ENCODE measurements at regions of chr14 and their contacts with region 1.

Region 1: DNA sequence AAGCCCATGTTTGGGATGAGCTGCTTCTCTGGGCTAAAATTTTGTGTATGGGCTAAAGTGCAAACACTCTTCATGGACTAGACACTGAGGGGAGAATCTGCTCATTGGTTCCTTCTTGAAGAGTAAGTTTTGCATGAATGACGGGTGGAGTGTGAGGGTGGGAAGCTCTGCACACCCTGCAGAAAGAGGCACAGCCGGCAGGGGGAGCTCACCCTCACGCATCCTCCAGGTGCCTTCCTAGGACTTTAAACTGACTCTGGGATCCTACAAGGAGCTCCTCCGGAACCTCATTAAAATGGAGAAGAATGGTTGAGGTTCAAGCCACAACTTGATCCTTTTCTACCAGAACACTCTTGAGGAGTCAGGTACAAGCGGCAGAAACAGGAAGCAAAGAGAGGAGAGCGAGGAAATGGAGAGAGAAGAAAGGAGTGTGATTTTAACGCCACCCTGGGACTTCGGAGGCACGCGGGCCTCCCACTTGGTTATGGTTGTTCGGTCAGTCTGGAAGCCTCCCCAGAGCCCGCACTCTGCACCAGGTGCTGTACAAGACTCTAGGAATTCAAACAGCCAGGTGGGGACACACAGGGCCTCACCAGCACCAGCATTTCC is 87.5 kb downstream of the SETD3 start:
- DNase-seq: peak; percentile 15
- ATAC-seq: peak; percentile 83
- H3K4me3 ChIP-seq: no peak overlapping the region
- H3K27ac ChIP-seq: no peak overlapping the region
- H3K4me1 ChIP-seq: peaks cover 0 to 12% of the 10 kb centered on the region in 2 experiments; a peak in 2 of 4 replicates
- H3K27me3 ChIP-seq: no peaks in the 10 kb centered on the region
- CTCF ChIP-seq: peak; percentile 34 to 97 (median 94); a peak in 5 of 6 replicates
- POLR2A ChIP-seq: no peak
- RAD21 ChIP-seq: peak; percentile 43; the same call in 1 of the 2 replicates

Region 2: DNA sequence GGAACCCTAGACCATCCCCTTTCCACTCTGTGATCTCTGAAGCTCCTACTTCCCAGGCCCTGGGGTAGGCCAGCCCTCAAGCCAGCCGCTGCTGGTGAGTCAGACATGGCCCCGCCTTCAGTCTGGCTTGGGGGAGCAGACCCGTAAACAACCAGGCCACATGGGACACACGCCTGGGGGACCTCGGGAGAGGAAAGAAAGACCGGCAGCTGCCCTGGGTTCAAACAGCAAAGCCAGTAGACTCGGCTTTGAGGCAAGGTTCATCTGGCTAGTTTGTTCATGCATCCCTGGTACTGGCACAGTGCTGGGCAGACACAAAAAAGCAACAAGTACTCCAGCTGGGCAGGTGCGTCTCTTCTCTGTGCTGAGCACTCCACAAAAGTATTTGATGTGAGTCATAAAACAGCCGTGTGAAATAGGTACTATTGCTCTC is 14.4 kb before region 1 on chr14:
- CTCF ChIA-PET with region 1: interaction called, 37 read pairs
- POLR2A ChIA-PET with region 1: interaction called, 3 read pairs
- RAD21 ChIA-PET with region 1: no interaction called
- intact Hi-C with region 1: no loop called
- DNase-seq: peak; percentile 22
- ATAC-seq: peak; percentile 94
- H3K4me3 ChIP-seq: peak overlapping the region in 1 of 2 experiments; percentile 34; a peak in 1 of 4 replicates
- H3K27ac ChIP-seq: no peak overlapping the region; the same call in 1 of the 2 replicates
- H3K4me1 ChIP-seq: peaks cover 9 to 27% of the 10 kb centered on the region in 2 experiments
- H3K27me3 ChIP-seq: no peaks in the 10 kb centered on the region
- CTCF ChIP-seq: no peak
- POLR2A ChIP-seq: no peak
- RAD21 ChIP-seq: no peak

Region 3: DNA sequence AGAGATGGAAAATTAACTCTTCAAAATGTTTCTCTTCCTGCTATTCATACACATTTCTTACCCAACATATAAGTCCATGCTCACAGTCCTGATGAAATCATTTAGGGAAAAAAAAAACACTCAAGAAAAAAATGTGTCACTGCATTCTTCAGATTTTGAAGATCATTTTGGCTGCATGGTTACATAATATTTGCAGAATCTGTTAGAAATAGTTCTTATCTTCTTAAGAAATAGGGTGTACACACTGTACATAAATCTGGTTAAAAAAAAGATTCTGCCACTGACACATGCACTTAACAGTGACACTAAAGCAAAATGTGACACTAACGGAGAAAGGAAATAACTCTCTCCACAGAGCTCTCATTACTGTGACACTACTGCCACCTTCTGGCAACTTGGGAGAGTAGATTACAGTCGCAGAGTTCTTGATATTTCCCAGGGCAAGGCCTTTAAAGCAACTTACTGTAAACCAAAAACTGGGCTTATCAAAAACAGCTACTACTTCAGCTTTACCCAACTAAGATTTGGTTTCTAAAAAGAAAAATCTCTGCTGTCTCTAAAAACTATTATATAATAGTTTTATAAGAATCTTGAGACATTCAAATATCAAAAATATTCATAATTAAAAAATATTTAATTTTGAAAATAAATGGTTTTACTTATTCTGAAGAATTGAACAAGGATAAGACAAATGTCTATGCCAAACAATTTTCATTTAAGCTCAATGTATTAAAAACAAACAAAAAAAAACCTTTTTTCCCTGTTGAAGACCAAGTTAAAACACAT is 22.5 kb after region 1 on chr14:
- CTCF ChIA-PET with region 1: interaction called, 53 read pairs
- POLR2A ChIA-PET with region 1: no interaction called
- RAD21 ChIA-PET with region 1: interaction called in 1 of 2 experiments, 4 read pairs
- intact Hi-C with region 1: loop called (anchors 2 kb)
- DNase-seq: peak; percentile 69
- ATAC-seq: peak; percentile 96
- H3K4me3 ChIP-seq: no peak overlapping the region
- H3K27ac ChIP-seq: no peak overlapping the region
- H3K4me1 ChIP-seq: 0 out of 4 replicates have a peak, but pooled peaks cover 0 to 4% of the 10 kb centered on the region in 2 experiments
- H3K27me3 ChIP-seq: no peaks in the 10 kb centered on the region
- CTCF ChIP-seq: peak; percentile 71 to 89 (median 71); a peak in 5 of 6 replicates
- POLR2A ChIP-seq: no peak
- RAD21 ChIP-seq: peak; percentile 85

Measured in HCT116 (cell line).